ENCODE measurements at regions of chr4 and their contacts with region 1.

Region 1: GRCh38 chr4:6917461-6918271 is 8.0 kb downstream of the TBC1D14 start:
- DNase-seq: peak; percentile 93

Region 2: DNA sequence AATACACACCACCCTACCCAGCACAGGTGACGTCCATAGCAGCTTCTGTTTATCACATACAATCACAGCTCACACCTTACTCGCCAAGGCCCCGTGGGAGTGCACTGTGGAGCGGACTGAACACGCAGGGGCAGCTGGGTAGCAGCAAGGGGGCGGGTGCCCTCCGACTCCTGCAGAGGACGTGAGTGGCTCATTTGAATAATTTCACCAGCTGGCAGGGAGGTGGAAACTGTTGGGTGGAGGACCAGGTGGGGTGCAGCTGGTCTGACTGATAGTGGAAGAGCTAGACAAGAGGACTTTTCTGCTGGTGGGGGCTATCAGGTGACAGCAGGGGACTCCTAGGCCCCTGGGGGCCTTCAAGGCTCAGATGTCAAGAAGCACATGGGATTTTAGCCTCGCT is 326.4 kb before region 1 on chr4:
- intact Hi-C with region 1: no loop called
- DNase-seq: no peak

Region 3: GRCh38 chr4:6840062-6840976 is 77.3 kb before region 1 on chr4:
- intact Hi-C with region 1: no loop called
- DNase-seq: no peak

Region 4: DNA sequence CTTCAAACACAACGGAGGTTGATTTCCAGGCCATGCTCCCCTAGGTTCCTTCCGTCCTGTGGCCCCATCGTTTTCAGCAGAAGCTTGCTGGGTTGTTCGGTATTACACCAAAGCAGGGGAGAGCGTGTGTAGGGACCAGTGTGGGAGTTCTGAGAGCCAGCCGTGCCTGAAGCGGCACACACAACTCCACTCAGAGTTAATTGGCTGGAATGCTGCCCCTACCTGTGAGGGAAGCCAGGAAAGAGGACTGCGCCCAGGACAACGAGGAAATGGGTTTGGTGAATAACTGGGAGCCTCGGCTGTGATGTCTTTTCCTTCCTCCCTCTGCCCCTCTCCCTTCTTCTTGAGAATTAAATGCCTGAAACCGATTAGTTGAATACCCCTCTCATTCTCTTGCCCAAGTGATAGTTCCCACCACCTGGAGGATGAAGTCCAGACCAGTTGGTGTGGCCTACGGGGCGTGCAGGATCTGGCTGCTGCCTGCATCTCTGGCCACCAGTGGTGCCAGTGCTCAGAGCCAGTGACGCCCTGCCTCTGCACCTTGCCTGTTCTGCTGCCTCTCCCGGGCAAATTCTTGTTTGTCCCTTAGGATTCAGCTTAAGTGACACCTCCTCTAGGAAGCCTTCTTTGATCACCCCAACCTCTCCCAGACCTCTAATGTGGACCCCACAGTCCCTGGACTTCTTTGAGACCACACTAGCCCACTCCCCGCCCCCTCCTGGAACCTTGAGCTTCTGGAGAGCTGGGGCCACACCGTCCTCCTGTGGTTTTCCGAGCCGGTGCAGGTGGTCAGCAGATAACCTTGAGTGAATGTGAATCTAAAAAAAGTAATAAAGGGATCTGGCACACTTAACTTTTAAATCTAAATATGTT is 25.6 kb after region 1 on chr4:
- intact Hi-C with region 1: loop called (anchors 1 kb)
- DNase-seq: no peak